ENCODE measurements at regions of chr6 and their contacts with region 1.

Region 1: GRCh38 chr6:29834564-29835436 is 7.2 kb downstream of the HLA-G start:
- DNase-seq: peak; percentile 60 to 72
- ATAC-seq: peak; percentile 65 to 76 (median 72)
- H3K4me3 ChIP-seq: no peak overlapping the region
- H3K4me3 Mint-ChIP-seq: no peak overlapping the region
- H3K27ac ChIP-seq: no peak overlapping the region
- H3K27ac Mint-ChIP-seq: no peak overlapping the region
- H3K4me1 ChIP-seq: no peaks in the 10 kb centered on the region
- H3K4me1 Mint-ChIP-seq: peaks cover 0 to 6% of the 10 kb centered on the region in 2 donors
- H3K27me3 ChIP-seq: peaks cover 19% of the 10 kb centered on the region
- H3K27me3 Mint-ChIP-seq: peaks cover 60 to 77% of the 10 kb centered on the region in 2 donors
- CTCF ChIP-seq: peak; percentile 87

Region 2: GRCh38 chr6:29649701-29650673 is 184.8 kb before region 1 on chr6:
- intact Hi-C with region 1: loop called (anchors 1 kb)
- DNase-seq: peak; percentile 96 to 100
- ATAC-seq: peak; percentile 93 to 98 (median 94)
- H3K4me3 ChIP-seq: peak overlapping the region; percentile 76
- H3K4me3 Mint-ChIP-seq: peak overlapping the region; percentile 96
- H3K27ac ChIP-seq: peak overlapping the region; percentile 99
- H3K27ac Mint-ChIP-seq: peak overlapping the region; percentile 99
- H3K4me1 ChIP-seq: peaks cover 14% of the 10 kb centered on the region
- H3K4me1 Mint-ChIP-seq: peaks cover 14% of the 10 kb centered on the region in 2 donors
- H3K27me3 ChIP-seq: no peaks in the 10 kb centered on the region
- H3K27me3 Mint-ChIP-seq: peaks cover 0 to 6% of the 10 kb centered on the region in 2 donors
- CTCF ChIP-seq: peak; percentile 95

Region 3: GRCh38 chr6:29705389-29706231 is 129.2 kb before region 1 on chr6:
- intact Hi-C with region 1: loop called (anchors 1 kb)
- DNase-seq: peak in 1 of 2 donors; percentile 73
- ATAC-seq: no peak
- H3K4me3 ChIP-seq: no peak overlapping the region
- H3K4me3 Mint-ChIP-seq: peak overlapping the region; percentile 55
- H3K27ac ChIP-seq: no peak overlapping the region
- H3K27ac Mint-ChIP-seq: peak overlapping the region; percentile 65 to 87
- H3K4me1 ChIP-seq: peaks cover 52% of the 10 kb centered on the region
- H3K4me1 Mint-ChIP-seq: peaks cover 57 to 66% of the 10 kb centered on the region in 2 donors
- H3K27me3 ChIP-seq: peaks cover 6% of the 10 kb centered on the region
- H3K27me3 Mint-ChIP-seq: peaks cover 10 to 17% of the 10 kb centered on the region in 2 donors
- CTCF ChIP-seq: peak; percentile 67

Region 4: DNA sequence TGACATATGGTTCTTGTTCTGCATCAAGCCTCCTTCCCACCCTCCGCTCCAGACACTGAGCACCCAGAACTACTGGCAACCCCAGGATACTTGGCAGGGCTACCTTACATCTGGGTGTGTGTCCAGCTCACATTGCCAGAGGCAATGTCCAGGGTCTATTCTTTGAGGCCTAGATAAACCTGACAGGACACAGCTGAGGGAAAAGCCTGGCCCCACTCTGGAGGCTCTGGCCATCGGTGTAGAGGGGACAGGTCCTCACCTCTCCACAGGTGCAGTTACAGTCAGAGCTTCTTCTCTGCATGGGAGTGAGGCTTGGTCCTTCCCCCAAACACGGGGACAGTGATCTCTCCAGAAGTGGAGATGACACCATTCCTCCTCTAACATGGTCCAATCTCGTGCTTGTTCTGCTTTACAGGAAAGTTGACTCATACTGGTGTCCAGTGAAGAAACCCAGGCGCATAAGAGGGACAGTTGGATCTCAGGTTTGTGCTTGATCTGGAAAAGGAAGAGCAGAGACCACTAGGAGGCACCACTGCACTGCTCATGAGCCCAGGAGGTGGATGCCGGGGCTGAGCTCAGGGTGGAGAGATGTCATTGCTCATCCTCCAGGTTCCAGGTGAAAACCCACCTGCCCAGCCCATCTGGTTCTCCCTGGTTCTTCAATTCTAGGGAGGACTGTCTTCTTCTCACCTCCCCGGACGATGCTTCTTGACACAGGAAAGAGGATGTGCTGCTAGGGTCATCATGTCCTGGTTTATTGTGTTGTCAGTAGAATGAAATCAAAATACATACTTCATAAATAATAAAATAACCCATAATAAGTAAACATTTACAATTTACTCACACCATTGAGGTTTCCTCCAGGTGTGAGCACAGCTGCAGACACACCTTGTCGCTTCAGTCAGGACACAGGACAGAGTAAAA is 96.8 kb before region 1 on chr6:
- intact Hi-C with region 1: loop called (anchors 1 kb)
- DNase-seq: peak; percentile 62 to 90
- ATAC-seq: peak; percentile 71 to 93 (median 86)
- H3K4me3 ChIP-seq: no peak overlapping the region
- H3K4me3 Mint-ChIP-seq: no peak overlapping the region
- H3K27ac ChIP-seq: no peak overlapping the region
- H3K27ac Mint-ChIP-seq: no peak overlapping the region
- H3K4me1 ChIP-seq: no peaks in the 10 kb centered on the region
- H3K4me1 Mint-ChIP-seq: peaks cover 15 to 21% of the 10 kb centered on the region in 2 donors
- H3K27me3 ChIP-seq: no peaks in the 10 kb centered on the region
- H3K27me3 Mint-ChIP-seq: no peaks in the 10 kb centered on the region
- CTCF ChIP-seq: peak; percentile 72

Measured in natural killer cell (primary cell).